Vagina (tissue), 2 donors: ENCODE measurements at regions of chr17 and their contacts with region 1.

Region 1: DNA sequence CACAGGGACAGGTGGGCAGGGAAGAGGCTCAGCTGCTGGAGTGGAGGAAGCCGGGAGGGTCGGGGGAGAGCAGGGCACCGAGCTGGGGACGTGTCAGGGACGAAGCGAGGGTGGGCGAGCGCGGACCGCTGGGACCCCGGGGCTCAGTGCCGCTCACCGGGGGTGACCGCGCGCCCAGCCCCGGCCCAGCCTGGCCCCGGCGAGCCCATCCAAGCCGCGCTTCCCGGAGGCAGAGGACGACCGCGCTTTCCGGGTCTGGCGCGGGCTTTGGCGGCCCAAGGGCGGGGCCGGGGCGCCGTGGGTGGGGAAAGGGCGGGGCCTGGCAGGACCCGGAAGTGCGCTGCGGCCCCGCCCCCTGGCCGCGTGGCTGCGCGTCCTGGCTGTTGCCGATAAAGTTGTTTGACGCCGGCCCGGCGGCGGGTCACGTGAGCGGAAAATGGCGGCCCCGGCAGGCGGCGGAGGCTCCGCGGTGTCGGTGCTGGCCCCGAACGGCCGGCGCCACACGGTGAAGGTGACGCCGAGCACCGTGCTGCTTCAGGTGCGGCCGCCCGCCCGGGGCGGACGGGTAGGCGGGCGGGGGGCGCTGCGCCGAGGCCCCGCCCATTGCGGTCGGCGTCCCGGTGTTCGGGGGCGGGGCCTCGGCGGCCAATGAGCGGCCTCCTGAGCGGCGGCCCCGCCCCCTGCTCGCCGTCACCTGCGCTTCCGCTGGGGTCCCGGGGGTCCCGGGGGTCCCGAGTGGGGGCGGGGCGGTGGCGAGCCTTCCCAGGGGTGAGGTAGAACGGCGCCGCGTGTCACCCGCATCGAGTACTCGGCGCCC is at the start of gene ASPSCR1:
- DNase-seq: no peak
- H3K4me3 ChIP-seq: peak within 1 kb of the TSS; percentile 66 to 72
- H3K27ac ChIP-seq: peak within 1 kb of the TSS; percentile 84
- H3K4me1 ChIP-seq: peaks cover 17% of the 10 kb centered on the region
- H3K27me3 ChIP-seq: no peaks in the 10 kb centered on the region
- CTCF ChIP-seq: no peak
- POLR2A ChIP-seq: peak in 1 of 2 donors; percentile 64
- total RNA-seq, gene ASPSCR1: 31.2 TPM

Region 2: DNA sequence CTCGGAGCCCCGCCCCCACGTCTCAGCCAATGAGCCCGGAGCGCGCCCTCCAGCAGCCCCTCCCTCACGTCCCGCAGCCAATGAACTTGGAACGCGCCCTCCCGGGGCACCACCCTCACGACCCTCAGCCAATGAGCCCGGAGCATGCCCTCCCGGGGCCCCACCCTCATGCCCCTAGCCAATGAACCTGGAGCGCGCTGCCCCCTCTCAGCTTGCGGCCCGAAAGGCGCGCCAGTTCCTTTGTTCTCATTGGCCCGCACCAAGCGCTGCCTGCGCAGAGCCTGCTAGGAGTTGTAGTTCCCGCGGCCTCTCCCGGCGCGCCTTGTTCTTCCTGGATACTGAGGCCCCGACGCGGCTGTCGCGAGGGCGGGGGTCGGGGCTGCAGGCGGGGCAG is 45.6 kb after region 1 on chr17 and contains the start of gene LRRC45:
- intact Hi-C with region 1: loop called (anchors 5 kb)
- DNase-seq: peak; percentile 99 to 100
- H3K4me3 ChIP-seq: peak within 1 kb of the TSS; percentile 82 to 84
- H3K27ac ChIP-seq: peak within 1 kb of the TSS; percentile 54
- H3K4me1 ChIP-seq: peaks cover 48% of the 10 kb centered on the region
- H3K27me3 ChIP-seq: no peaks in the 10 kb centered on the region
- CTCF ChIP-seq: no peak
- POLR2A ChIP-seq: no peak
- total RNA-seq, gene LRRC45: 14.0 TPM

Region 3: DNA sequence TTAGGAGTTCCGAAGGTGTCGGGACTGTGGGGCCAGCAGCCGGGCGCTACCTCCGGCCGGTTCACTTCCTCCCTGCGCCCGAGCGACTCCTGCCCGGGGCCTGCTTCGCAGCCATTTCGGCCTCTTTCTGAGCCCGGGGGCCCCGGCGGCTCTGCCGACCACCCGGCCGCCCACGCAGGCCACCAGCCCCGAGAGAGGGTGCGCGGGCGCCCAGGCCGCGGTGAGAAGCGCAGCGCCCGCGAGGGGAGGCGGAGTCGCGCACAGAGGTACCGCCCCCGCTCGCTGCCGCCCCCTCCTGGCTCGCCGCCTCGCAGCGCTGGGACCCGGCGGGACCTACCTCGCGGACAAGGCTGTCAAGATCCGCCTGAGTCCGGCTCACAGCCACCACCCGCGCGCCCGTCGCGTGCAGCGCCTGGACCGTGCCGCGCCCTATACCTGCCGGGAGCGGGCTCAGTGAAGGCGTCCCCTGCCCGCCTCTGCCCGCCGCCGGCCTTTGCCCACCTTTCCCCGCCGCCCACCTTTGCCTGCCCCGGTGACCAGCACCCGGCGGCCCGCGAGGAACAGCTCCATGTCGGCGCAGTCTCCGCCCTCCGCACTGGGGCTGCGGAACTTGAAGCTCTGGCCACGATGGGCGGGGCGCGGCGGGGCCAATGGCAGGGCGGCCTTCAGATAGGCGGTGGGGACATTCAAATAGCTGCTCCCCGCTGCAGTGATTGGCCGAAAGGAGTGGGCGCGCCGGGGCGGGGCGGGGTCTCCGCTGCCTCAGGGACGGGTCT is 59.9 kb after region 1 on chr17 and contains the start of gene DCXR:
- intact Hi-C with region 1: no loop called
- DNase-seq: peak in 1 of 2 donors; percentile 97
- H3K4me3 ChIP-seq: peak within 1 kb of the TSS; percentile 71 to 79
- H3K27ac ChIP-seq: peak within 1 kb of the TSS; percentile 87
- H3K4me1 ChIP-seq: peaks cover 18% of the 10 kb centered on the region
- H3K27me3 ChIP-seq: no peaks in the 10 kb centered on the region
- CTCF ChIP-seq: peak; percentile 13 to 64 (median 50)
- POLR2A ChIP-seq: peak in 1 of 2 donors; percentile 95
- total RNA-seq, gene DCXR: 106 TPM